ENCODE measurements at regions of chr10 and their contacts with region 1.

Region 1: DNA sequence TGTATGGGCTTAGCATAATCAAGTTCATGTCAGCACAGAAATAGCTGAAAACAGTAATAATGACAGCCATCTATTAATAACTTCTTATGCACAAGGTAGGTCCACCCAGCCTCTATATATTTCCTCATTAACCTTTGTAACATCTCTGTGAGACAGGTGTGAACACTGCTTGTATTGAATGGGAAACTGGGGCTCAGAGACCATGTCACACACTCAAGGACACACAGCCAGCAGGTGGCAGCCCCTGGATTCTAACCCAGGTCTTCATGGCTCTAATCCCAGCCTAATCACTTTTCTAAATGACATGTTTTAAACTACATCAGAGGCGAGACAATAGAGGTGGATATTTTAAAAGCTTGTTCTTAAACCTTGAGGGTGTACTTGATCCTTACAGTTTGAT is 591.4 kb downstream of the PARD3 start:
- DNase-seq: no peak
- H3K4me3 ChIP-seq: no peak overlapping the region
- H3K27ac ChIP-seq: no peak overlapping the region
- H3K4me1 ChIP-seq: peaks cover 0 to 19% (median 7%) of the 10 kb centered on the region in 4 experiments
- H3K27me3 ChIP-seq: no peaks in the 10 kb centered on the region

Region 2: DNA sequence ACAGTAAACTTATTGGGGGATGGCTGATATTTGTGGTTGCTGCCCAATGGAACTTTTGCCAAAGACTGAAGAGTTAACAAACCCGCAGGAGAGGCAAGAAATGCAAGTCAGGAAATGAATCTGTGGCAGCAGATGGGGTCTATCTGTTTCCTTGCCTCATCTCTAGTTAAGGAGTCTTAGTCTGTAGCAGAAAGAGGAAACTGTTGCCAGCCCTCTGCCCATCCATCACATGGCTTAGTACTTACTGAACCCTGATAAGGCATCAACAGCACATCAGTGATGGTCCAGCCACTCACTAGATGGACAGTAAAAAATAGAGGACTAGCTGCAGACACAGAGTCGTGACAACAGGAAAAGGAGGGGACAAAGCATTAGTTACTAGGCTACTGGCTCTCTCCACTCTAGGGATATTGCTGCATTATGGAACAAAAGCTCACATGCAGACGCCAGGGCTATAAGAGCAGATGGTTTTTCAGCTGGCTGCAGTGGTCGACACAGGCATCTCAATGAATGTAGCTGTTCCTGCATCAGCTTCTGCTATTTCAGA is 23.2 kb before region 1 on chr10:
- CTCF ChIA-PET with region 1: no interaction called
- POLR2A ChIA-PET with region 1: no interaction called
- DNase-seq: peak; percentile 38 to 87 (median 85)
- H3K4me3 ChIP-seq: peak overlapping the region in 1 of 7 experiments; percentile 23
- H3K27ac ChIP-seq: no peak overlapping the region
- H3K4me1 ChIP-seq: peaks cover 2 to 34% (median 13%) of the 10 kb centered on the region in 4 experiments
- H3K27me3 ChIP-seq: no peaks in the 10 kb centered on the region

Region 3: GRCh38 chr10:34235164-34235832 is 11.6 kb after region 1 on chr10:
- CTCF ChIA-PET with region 1: interaction called, 16 read pairs
- POLR2A ChIA-PET with region 1: no interaction called
- DNase-seq: no peak
- H3K4me3 ChIP-seq: no peak overlapping the region
- H3K27ac ChIP-seq: no peak overlapping the region
- H3K4me1 ChIP-seq: peaks cover 0 to 8% (median 0%) of the 10 kb centered on the region in 4 experiments
- H3K27me3 ChIP-seq: no peaks in the 10 kb centered on the region

Region 4: DNA sequence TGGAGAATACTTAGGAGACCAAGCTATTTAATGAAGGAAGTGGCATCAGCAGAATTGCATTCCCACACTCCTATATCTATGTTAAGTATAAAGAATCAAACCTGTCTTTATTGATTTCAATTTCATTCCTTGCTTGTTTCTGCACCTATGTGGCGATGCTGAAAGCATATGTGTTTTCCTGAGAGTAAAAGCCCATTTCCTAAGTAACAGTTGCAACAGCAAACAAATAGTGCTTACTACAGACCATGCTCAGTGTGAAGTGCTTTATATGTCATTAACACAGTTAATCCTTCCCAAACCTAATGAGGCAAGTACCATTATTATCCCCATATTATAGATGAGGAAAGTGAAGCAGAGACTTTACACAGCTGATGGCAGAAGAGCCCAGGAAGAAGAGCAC is 39.3 kb after region 1 on chr10:
- CTCF ChIA-PET with region 1: no interaction called
- POLR2A ChIA-PET with region 1: no interaction called
- DNase-seq: peak in 1 of 3 donors; percentile 2
- H3K4me3 ChIP-seq: no peak overlapping the region
- H3K27ac ChIP-seq: no peak overlapping the region
- H3K4me1 ChIP-seq: no peaks in the 10 kb centered on the region
- H3K27me3 ChIP-seq: no peaks in the 10 kb centered on the region